ENCODE measurements at regions of chr3 and their contacts with region 1.

Region 1: GRCh38 chr3:197667978-197668377 is 68.7 kb downstream of the RUBCN start:
- DNase-seq: no peak
- ATAC-seq: no peak
- H3K4me3 ChIP-seq: no peak overlapping the region
- H3K27ac ChIP-seq: no peak overlapping the region
- H3K4me1 ChIP-seq: peaks cover 0 to 8% (median 1%) of the 10 kb centered on the region in 12 donors
- H3K27me3 ChIP-seq: peaks cover 0 to 3% (median 0%) of the 10 kb centered on the region in 9 donors
- CTCF ChIP-seq: no peak
- POLR2A ChIP-seq: no peak

Region 2: DNA sequence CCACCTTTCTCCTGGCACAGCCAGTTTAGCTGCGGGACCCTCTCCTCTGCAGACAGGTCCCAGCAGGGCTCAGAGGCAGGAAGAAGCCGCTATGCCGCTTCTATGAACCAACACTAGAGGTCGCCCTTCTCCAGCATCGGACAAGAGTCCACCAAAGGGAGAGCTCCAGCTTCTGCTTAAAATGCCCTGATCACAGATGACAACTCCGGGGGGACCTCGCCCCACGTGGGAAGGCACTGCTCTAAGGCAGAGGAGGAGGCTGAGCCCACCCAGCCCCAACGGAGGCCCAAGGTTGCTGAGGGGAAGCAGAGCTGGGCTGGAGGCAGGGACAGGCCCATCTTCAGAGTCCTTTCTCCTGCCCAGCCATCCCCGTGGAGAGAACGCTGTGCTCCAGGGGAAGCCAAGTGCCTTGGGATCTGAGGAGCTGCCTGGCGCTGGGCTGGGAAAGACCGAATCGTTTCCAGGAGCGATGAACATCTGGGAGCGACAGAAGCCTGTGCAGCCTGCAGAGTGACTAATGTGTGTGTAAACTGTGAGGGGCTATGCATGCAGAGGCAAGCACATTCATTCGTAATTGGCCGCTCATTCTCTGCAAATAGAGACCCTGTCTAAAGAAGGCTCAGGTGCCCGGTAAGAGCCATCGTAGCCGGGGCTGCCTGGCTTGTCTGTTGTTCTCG is 68.8 kb before region 1 on chr3:
- intact Hi-C with region 1: loop called in 2 of 10 experiments (anchors 5 to 10 kb)
- DNase-seq: peak; percentile 65 to 75 (median 73)
- ATAC-seq: peak; percentile 73 to 89 (median 84)
- H3K4me3 ChIP-seq: peak overlapping the region in 2 of 12 donors; percentile 20 to 22
- H3K27ac ChIP-seq: peak overlapping the region in 3 of 12 donors; percentile 9 to 35 (median 9)
- H3K4me1 ChIP-seq: peaks cover 0 to 13% (median 6%) of the 10 kb centered on the region in 12 donors
- H3K27me3 ChIP-seq: peaks cover 0 to 9% (median 0%) of the 10 kb centered on the region in 9 donors
- CTCF ChIP-seq: peak; percentile 82 to 98 (median 88)
- POLR2A ChIP-seq: no peak